ENCODE measurements at regions of chr1 and their contacts with region 1.

Region 1: GRCh38 chr1:155167166-155168104 is 5.7 kb downstream of the KRTCAP2 start:
- DNase-seq: peak; percentile 62 to 93 (median 80)
- ATAC-seq: peak; percentile 71 to 82 (median 76)
- H3K4me3 ChIP-seq: no peak overlapping the region
- H3K4me3 Mint-ChIP-seq: peak overlapping the region; percentile 28 to 70 (median 62)
- H3K27ac ChIP-seq: no peak overlapping the region
- H3K27ac Mint-ChIP-seq: no peak overlapping the region
- H3K4me1 ChIP-seq: peaks cover 11 to 23% of the 10 kb centered on the region in 2 experiments
- H3K4me1 Mint-ChIP-seq: peaks cover 20 to 27% (median 25%) of the 10 kb centered on the region in 3 donors
- H3K27me3 ChIP-seq: peaks cover 0 to 11% of the 10 kb centered on the region in 2 experiments
- H3K27me3 Mint-ChIP-seq: no peaks in the 10 kb centered on the region

Region 2: GRCh38 chr1:155091071-155091709 is 76.2 kb before region 1 on chr1:
- CTCF ChIA-PET with region 1: interaction called, 8 to 29 read pairs
- POLR2A ChIA-PET with region 1: no interaction called
- DNase-seq: peak; percentile 33 to 88 (median 71)
- ATAC-seq: peak; percentile 74 to 83 (median 78)
- H3K4me3 ChIP-seq: no peak overlapping the region
- H3K4me3 Mint-ChIP-seq: no peak overlapping the region
- H3K27ac ChIP-seq: no peak overlapping the region
- H3K27ac Mint-ChIP-seq: no peak overlapping the region
- H3K4me1 ChIP-seq: peaks cover under 1 to 17% of the 10 kb centered on the region in 2 experiments
- H3K4me1 Mint-ChIP-seq: peaks cover 3 to 10% (median 5%) of the 10 kb centered on the region in 3 donors
- H3K27me3 ChIP-seq: peaks cover 0 to 32% of the 10 kb centered on the region in 2 experiments
- H3K27me3 Mint-ChIP-seq: peaks cover 4 to 7% of the 10 kb centered on the region in 2 donors

Region 3: DNA sequence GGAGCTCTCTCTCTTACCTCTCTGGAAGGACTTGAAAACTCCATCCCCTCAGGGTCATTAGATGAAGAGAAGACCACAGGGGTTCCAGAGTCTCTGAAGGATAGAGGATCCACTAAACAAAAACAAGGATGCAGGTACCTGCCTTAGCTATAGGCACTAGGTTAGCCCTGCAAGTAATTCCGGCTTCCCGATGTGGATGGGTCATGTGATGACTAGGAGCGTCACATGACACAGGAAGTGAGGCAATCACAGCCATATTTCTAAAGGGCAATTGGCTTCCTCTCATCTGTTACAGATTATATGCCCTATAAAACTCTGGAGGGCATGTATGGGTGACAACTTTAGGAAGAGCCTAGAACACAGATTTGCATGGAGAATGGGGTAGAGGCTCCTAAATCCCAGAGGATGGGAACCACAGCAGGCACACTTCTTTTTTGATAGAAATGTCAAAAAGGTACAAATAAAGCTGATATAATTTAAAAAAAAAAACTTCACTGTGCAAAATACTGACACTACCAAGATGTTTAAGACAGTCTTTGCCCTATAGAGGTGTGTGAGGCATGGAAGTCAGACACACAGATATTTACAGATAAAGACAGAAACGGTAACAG is 73.7 kb after region 1 on chr1:
- CTCF ChIA-PET with region 1: no interaction called
- POLR2A ChIA-PET with region 1: no interaction called
- DNase-seq: peak in 33 of 35 experiments; percentile 28 to 86 (median 57)
- ATAC-seq: peak in 3 of 4 experiments; percentile 36 to 53 (median 39)
- H3K4me3 ChIP-seq: peak overlapping the region; percentile 42 to 53
- H3K4me3 Mint-ChIP-seq: peak overlapping the region; percentile 83 to 93 (median 87)
- H3K27ac ChIP-seq: peak overlapping the region; percentile 26
- H3K27ac Mint-ChIP-seq: peak overlapping the region; percentile 71 to 94
- H3K4me1 ChIP-seq: peaks cover 19 to 51% of the 10 kb centered on the region in 2 experiments
- H3K4me1 Mint-ChIP-seq: peaks cover 45 to 63% (median 50%) of the 10 kb centered on the region in 3 donors
- H3K27me3 ChIP-seq: no peaks in the 10 kb centered on the region
- H3K27me3 Mint-ChIP-seq: peaks cover 3 to 4% of the 10 kb centered on the region in 2 donors